Heart right ventricle (tissue), 16 donors: ENCODE measurements at regions of chr11 and their contacts with region 1.

Region 1: GRCh38 chr11:61816736-61817455 is at the start of gene FADS1:
- DNase-seq: peak; percentile 89 to 93
- ATAC-seq: peak; percentile 16 to 74 (median 44)
- H3K4me3 ChIP-seq: peak within 1 kb of the TSS; percentile 50 to 93 (median 76)
- H3K27ac ChIP-seq: peak within 1 kb of the TSS; percentile 93 to 100 (median 99)
- H3K4me1 ChIP-seq: peaks cover 4 to 29% (median 10%) of the 10 kb centered on the region in 9 donors
- H3K27me3 ChIP-seq: peaks cover 0 to 9% (median 0%) of the 10 kb centered on the region in 7 donors
- CTCF ChIP-seq: peak; percentile 14 to 75 (median 55)
- total RNA-seq, gene FADS1: 16.4 to 37.4 (median 25.4) TPM

Region 2: DNA sequence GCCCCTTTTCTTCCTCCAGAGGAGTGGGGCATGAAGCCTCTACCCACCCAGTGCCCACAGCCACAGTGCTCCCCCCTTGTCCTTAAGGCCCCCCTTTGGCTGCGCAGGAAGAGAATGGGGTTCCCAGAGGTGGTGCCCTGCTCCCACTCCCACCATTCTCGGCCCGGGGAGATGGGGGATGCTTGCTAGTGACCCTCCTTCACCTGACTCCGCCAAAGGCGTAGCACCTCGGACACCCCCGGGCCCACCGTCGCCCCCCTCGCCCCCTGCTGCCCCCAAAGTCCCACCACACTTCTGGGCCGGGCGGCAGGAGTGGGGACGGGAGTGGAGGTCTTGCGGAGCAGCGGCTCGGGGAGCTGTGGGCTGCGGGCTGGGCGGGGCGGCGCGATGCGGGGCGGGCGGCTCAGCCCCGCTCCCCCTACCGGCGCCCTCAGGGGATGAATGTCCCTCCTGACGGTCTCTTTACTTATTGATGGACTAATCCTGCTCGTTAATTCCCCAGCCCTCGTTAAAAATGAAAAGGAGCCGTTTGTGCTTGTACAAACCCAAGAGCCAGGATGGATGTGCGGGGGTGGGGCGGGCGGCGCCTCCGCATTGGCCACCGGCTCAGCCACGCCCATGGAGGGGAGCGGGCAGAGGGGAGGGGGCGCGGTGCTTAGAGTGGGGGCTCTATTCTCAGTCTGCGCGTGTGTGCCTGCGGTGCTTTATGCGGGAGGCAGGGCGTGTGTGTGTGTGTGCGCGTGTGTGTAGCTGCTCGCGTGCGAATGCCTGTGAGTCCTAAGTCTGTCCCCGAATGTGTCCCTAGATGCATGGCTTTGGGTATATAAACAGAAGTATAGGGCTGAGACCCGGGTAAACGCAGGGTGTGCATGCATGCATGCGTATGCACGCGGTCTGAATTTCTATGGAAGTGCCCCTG is 261.6 kb before region 1 on chr11:
- intact Hi-C with region 1: no loop called
- DNase-seq: no peak
- ATAC-seq: no peak
- H3K4me3 ChIP-seq: no peak overlapping the region
- H3K27ac ChIP-seq: no peak overlapping the region
- H3K4me1 ChIP-seq: peaks cover 0 to 30% (median 22%) of the 10 kb centered on the region in 9 donors
- H3K27me3 ChIP-seq: peaks cover 0 to 49% (median 7%) of the 10 kb centered on the region in 7 donors
- CTCF ChIP-seq: peak in 1 of 9 donors; percentile 9

Region 3: GRCh38 chr11:61752117-61752924 is 64.6 kb before region 1 on chr11 and contains the start of gene MYRF:
- intact Hi-C with region 1: no loop called
- DNase-seq: peak; percentile 35 to 65
- ATAC-seq: peak in 6 of 8 donors; percentile 28 to 72 (median 42)
- H3K4me3 ChIP-seq: peak within 1 kb of the TSS in 9 of 10 donors; percentile 26 to 55 (median 46)
- H3K27ac ChIP-seq: no peak within 1 kb of the TSS
- H3K4me1 ChIP-seq: peaks cover 0 to 30% (median 7%) of the 10 kb centered on the region in 9 donors
- H3K27me3 ChIP-seq: peaks cover 0 to 36% (median 5%) of the 10 kb centered on the region in 7 donors
- CTCF ChIP-seq: peak in 7 of 9 donors; percentile 30 to 65 (median 50)
- total RNA-seq, gene MYRF: 0.13 to 1.2 (median 0.26) TPM

Region 4: DNA sequence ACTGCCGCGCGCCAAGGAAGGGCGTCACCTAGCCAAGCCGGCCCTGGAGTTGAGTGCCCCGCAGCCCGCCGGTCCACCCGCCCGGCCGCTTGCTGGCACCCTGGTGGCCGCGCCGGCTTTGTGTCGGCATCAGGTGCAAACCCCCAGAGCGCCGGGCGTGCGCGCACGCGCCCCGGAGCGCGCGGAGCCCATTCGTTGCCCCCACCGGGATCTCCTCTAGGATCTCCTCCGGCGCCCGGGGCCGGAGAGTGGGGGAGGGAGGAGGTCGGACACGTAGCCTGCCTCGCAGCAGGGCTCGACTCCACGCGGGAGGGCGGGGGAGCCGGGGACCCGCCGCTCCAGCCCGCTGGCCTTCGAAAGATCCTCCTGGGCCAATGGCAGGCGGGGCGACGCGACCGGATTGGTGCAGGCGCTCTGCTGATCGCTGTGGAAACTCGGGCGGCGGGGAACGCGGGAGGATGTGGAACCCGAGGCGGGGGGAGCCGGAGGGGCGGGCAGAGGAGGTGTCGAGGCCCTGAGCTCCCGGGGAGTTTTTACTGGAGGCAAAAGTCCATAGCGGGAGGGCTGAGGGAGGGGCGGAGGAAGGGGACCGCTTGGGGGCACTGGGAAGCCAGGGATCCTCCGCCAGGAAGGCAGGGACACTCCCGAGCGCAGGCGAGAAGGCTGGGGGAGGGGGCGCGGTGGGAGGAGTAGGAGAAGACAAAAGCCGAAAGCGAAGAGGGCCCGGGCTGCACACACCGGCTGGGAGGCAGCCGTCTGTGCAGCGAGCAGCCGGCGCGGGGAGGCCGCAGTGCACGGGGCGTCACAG is 10.9 kb after region 1 on chr11 and contains the start of gene FADS2:
- intact Hi-C with region 1: loop called in 1 of 10 experiments (anchors 2 kb)
- DNase-seq: peak; percentile 93 to 94
- ATAC-seq: peak; percentile 84 to 92 (median 88)
- H3K4me3 ChIP-seq: peak within 1 kb of the TSS; percentile 44 to 86 (median 73)
- H3K27ac ChIP-seq: peak within 1 kb of the TSS; percentile 40 to 95 (median 86)
- H3K4me1 ChIP-seq: peaks cover 12 to 57% (median 43%) of the 10 kb centered on the region in 9 donors
- H3K27me3 ChIP-seq: peaks cover 0 to 11% (median 0%) of the 10 kb centered on the region in 7 donors
- CTCF ChIP-seq: peak in 1 of 9 donors; percentile 30
- total RNA-seq, gene FADS2: 15.1 to 37.0 (median 23.5) TPM

Region 5: GRCh38 chr11:61851113-61851899 is 34.4 kb after region 1 on chr11:
- intact Hi-C with region 1: loop called in 2 of 10 experiments (anchors 5 kb)
- DNase-seq: peak in 1 of 2 donors; percentile 78
- ATAC-seq: peak; percentile 66 to 84 (median 74)
- H3K4me3 ChIP-seq: peak overlapping the region in 1 of 10 donors; percentile 13
- H3K27ac ChIP-seq: peak overlapping the region; percentile 12 to 83 (median 70)
- H3K4me1 ChIP-seq: peaks cover 5 to 36% (median 18%) of the 10 kb centered on the region in 9 donors
- H3K27me3 ChIP-seq: no peaks in the 10 kb centered on the region
- CTCF ChIP-seq: no peak

Region 6: GRCh38 chr11:61860054-61860903 is 43.4 kb after region 1 on chr11:
- intact Hi-C with region 1: loop called in 2 of 10 experiments (anchors 5 to 10 kb)
- DNase-seq: peak; percentile 81 to 83
- ATAC-seq: peak; percentile 45 to 82 (median 72)
- H3K4me3 ChIP-seq: no peak overlapping the region
- H3K27ac ChIP-seq: peak overlapping the region in 8 of 10 donors; percentile 38 to 88 (median 68)
- H3K4me1 ChIP-seq: peaks cover 6 to 27% (median 14%) of the 10 kb centered on the region in 9 donors
- H3K27me3 ChIP-seq: no peaks in the 10 kb centered on the region
- CTCF ChIP-seq: no peak

Region 7: GRCh38 chr11:61891331-61892084 is 74.6 kb after region 1 on chr11 and contains the start of gene FADS3:
- intact Hi-C with region 1: loop called in 4 of 10 experiments (anchors 5 kb)
- DNase-seq: peak; percentile 88 to 92
- ATAC-seq: peak; percentile 85 to 91 (median 87)
- H3K4me3 ChIP-seq: peak within 1 kb of the TSS; percentile 63 to 98 (median 93)
- H3K27ac ChIP-seq: peak within 1 kb of the TSS; percentile 84 to 98 (median 96)
- H3K4me1 ChIP-seq: peaks cover 14 to 58% (median 41%) of the 10 kb centered on the region in 9 donors
- H3K27me3 ChIP-seq: no peaks in the 10 kb centered on the region
- CTCF ChIP-seq: peak in 3 of 9 donors; percentile 3 to 29 (median 22)
- total RNA-seq, gene FADS3: 54.9 to 119 (median 71.1) TPM